GM12878 (cell line): ENCODE measurements at regions of chr3 and their contacts with region 1.

Region 1: GRCh38 chr3:61561374-61562041 is at the start of gene PTPRG:
- DNase-seq: no peak
- ATAC-seq: peak; percentile 61
- H3K4me3 ChIP-seq: peak within 1 kb of the TSS; percentile 59
- H3K27ac ChIP-seq: no peak within 1 kb of the TSS
- H3K4me1 ChIP-seq: no peaks in the 10 kb centered on the region
- H3K27me3 ChIP-seq: peaks cover 5 to 20% of the 10 kb centered on the region in 2 experiments
- CTCF ChIP-seq: no peak
- EP300 ChIP-seq: no peak
- POLR2A ChIP-seq: no peak
- RAD21 ChIP-seq: no peak
- polyA plus RNA-seq, gene PTPRG: 0.29 to 0.42 TPM

Region 2: DNA sequence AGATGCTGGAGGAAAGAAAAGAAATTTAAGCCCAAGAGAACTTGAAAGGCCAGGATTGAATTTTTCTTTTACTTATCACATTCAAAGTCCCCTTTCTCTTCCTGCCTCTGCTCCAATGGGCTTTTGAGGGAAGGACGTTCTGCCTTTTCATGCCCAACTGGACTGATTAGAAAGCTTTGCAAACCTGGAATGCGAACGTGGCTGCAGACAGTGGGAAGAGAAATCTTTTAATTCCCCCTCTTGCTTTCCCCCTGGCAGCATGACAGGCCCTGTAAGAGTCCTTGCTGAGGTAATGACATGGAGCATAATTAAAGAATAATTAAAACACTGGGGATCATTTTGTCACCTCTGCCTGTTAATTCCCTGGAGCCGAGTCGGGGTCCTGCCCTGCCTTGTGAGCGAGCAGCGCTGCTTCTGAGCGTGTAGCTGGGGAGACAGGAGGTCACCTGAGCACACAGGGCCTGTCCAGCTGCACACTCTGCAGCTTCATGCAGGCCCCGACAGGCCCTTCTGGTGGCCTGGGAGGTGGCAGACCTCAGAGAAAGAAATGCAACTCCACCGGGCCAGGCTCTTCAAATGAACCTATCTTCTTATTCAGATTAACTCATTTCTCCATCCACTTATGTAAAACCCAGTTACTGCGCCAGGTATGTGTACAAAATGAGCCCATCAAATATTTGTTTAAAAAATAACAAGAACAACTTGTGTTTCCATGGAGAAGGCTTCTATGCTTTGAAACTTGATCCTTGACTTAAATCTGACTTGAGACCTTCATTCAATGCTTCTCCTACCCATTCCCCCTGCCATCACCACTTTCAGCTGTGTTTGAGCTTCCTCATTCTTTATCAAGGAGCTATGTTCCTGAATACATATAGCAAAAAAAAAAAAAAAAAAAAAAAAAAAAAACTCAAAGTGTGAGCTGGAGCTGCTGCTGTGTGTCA is 1883.5 kb before region 1 on chr3:
- CTCF ChIA-PET with region 1: no interaction called
- POLR2A ChIA-PET with region 1: no interaction called
- RAD21 ChIA-PET with region 1: no interaction called
- SMC1A ChIA-PET with region 1: no interaction called
- in situ Hi-C with region 1: no loop called
- intact Hi-C with region 1: no loop called
- DNase-seq: no peak
- ATAC-seq: no peak
- H3K4me3 ChIP-seq: no peak overlapping the region
- H3K27ac ChIP-seq: no peak overlapping the region
- H3K4me1 ChIP-seq: no peaks in the 10 kb centered on the region
- H3K27me3 ChIP-seq: no peaks in the 10 kb centered on the region; a peak in 1 of 4 replicates
- CTCF ChIP-seq: no peak
- EP300 ChIP-seq: no peak
- POLR2A ChIP-seq: no peak
- RAD21 ChIP-seq: no peak

Region 3: DNA sequence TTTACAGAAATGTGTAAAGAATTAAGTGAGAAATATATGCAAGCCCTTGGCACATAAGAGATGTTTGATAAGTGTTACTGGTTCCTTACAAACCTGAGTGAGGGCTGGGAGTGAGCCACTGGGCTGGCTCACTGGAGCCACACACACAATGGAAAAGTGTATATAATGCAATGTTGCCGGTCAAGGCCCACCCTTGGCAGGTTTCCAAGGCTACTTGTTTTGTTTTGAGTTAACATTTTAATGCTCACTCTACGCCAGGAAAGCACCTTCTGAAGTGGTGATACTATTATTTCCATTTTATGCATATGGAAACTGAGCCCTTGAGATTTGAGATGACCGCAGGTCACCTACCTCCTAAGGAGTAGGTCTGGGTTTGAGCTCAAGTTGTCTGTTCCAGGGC is 238.4 kb before region 1 on chr3:
- CTCF ChIA-PET with region 1: no interaction called
- POLR2A ChIA-PET with region 1: no interaction called
- RAD21 ChIA-PET with region 1: no interaction called
- SMC1A ChIA-PET with region 1: no interaction called
- in situ Hi-C with region 1: no loop called
- intact Hi-C with region 1: no loop called
- DNase-seq: no peak
- ATAC-seq: peak; percentile 62
- H3K4me3 ChIP-seq: no peak overlapping the region
- H3K27ac ChIP-seq: no peak overlapping the region
- H3K4me1 ChIP-seq: no peaks in the 10 kb centered on the region
- H3K27me3 ChIP-seq: no peaks in the 10 kb centered on the region
- CTCF ChIP-seq: no peak
- EP300 ChIP-seq: no peak
- POLR2A ChIP-seq: no peak
- RAD21 ChIP-seq: no peak

Region 4: DNA sequence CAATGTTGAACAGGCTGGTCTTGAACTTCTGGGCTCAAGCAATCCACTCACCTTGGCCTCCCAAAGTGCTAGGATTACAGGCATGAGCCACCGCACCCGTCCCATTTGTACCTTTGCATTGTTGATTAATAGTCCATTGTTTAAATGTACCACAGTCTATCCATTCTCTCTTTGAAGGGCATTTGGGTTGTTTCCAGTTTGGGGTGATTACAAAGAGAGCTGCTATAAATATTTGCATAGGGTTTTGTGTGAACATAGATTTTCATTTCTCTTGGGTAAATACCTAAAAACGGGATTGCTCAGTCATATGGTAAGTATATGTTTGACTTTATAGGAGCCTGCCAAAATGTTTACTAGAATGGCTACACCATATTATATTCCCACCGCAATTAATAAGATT is 13.9 kb before region 1 on chr3:
- CTCF ChIA-PET with region 1: interaction called, 3 read pairs
- POLR2A ChIA-PET with region 1: interaction called, 15 read pairs
- RAD21 ChIA-PET with region 1: interaction called, 8 read pairs
- SMC1A ChIA-PET with region 1: interaction called, 7 read pairs
- in situ Hi-C with region 1: no loop called
- intact Hi-C with region 1: no loop called
- DNase-seq: no peak
- ATAC-seq: peak; percentile 84
- H3K4me3 ChIP-seq: no peak overlapping the region
- H3K27ac ChIP-seq: no peak overlapping the region
- H3K4me1 ChIP-seq: no peaks in the 10 kb centered on the region
- H3K27me3 ChIP-seq: no peaks in the 10 kb centered on the region
- CTCF ChIP-seq: no peak
- EP300 ChIP-seq: peak in 1 of 2 experiments; percentile 70; a peak in 1 of 4 replicates
- POLR2A ChIP-seq: no peak
- RAD21 ChIP-seq: no peak

Region 5: GRCh38 chr3:61682671-61683548 is 121.4 kb after region 1 on chr3:
- CTCF ChIA-PET with region 1: no interaction called
- POLR2A ChIA-PET with region 1: no interaction called
- RAD21 ChIA-PET with region 1: interaction called, 19 read pairs
- SMC1A ChIA-PET with region 1: interaction called, 10 read pairs
- in situ Hi-C with region 1: no loop called
- intact Hi-C with region 1: loop called (anchors 5 kb)
- DNase-seq: no peak
- ATAC-seq: peak; percentile 57
- H3K4me3 ChIP-seq: no peak overlapping the region
- H3K27ac ChIP-seq: no peak overlapping the region
- H3K4me1 ChIP-seq: no peaks in the 10 kb centered on the region
- H3K27me3 ChIP-seq: no peaks in the 10 kb centered on the region; a peak in 1 of 4 replicates
- CTCF ChIP-seq: no peak
- EP300 ChIP-seq: 0 out of 4 replicates have a peak, but pooled peaks of 1 of the 2 experiments have one; percentile 51
- POLR2A ChIP-seq: no peak
- RAD21 ChIP-seq: no peak

Region 6: GRCh38 chr3:61783993-61784718 is 222.6 kb after region 1 on chr3:
- CTCF ChIA-PET with region 1: interaction called, 14 read pairs
- POLR2A ChIA-PET with region 1: no interaction called
- RAD21 ChIA-PET with region 1: interaction called, 14 read pairs
- SMC1A ChIA-PET with region 1: interaction called, 27 read pairs
- in situ Hi-C with region 1: no loop called
- intact Hi-C with region 1: loop called (anchors 5 kb)
- DNase-seq: no peak
- ATAC-seq: peak; percentile 77
- H3K4me3 ChIP-seq: no peak overlapping the region
- H3K27ac ChIP-seq: no peak overlapping the region
- H3K4me1 ChIP-seq: no peaks in the 10 kb centered on the region
- H3K27me3 ChIP-seq: no peaks in the 10 kb centered on the region; a peak in 1 of 4 replicates
- CTCF ChIP-seq: no peak
- EP300 ChIP-seq: no peak
- POLR2A ChIP-seq: no peak
- RAD21 ChIP-seq: no peak

Region 7: DNA sequence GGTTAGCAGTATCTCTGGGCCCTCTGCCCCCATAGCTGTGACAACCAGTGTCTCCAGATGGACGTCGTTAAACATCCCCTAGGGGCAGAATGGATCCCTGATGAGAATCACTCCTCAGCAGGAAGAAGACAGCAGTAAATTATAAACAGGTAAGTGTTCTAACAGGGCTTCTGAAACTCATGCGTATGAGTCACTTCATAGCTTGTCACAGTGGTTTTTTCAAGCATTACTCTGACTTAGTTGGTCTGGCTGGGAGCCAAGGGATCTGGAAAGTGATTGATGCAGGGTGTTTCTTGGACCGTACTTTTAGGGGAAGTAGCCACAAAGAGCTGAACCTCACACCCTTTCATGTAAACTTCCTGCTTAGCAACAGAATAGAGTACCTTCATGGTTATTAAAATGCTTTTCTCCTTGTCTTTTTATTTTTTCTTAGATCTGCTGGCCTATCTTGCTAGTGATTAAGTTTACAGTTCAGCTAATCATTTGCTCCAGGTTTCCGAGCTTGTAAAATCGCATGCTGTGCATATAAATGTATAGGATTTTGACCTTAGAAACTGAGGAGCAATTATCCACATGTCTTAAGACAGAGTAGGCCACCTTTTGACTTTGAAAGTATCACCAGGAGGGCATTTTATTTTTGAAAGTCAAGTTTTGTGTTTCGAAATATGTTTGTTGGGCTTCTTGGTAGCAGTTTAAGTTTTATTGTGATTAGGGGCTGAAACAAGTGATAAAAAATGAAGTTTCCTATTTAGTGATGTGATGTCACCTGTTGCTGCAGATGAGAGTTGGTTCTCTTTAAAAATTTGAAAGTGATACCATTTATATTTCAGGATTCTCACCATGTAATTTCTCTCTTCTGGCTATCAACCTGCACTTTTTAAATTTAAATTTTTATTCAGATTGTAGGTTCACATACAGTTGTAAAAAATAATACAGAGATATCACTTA is 333.8 kb after region 1 on chr3:
- CTCF ChIA-PET with region 1: interaction called, 11 read pairs
- POLR2A ChIA-PET with region 1: interaction called, 3 read pairs
- RAD21 ChIA-PET with region 1: interaction called, 18 read pairs
- SMC1A ChIA-PET with region 1: interaction called, 18 read pairs
- in situ Hi-C with region 1: no loop called
- intact Hi-C with region 1: no loop called
- DNase-seq: peak; percentile 87
- ATAC-seq: peak; percentile 90
- H3K4me3 ChIP-seq: no peak overlapping the region
- H3K27ac ChIP-seq: no peak overlapping the region; the same call in 1 of the 2 replicates
- H3K4me1 ChIP-seq: peaks cover 5% of the 10 kb centered on the region; the same call in 1 of the 2 replicates
- H3K27me3 ChIP-seq: no peaks in the 10 kb centered on the region
- CTCF ChIP-seq: peak in 1 of 3 experiments; percentile 21; a peak in 1 of 6 replicates
- EP300 ChIP-seq: peak; percentile 62 to 92
- POLR2A ChIP-seq: no peak
- RAD21 ChIP-seq: no peak; the same call in 1 of the 2 replicates

Region 8: DNA sequence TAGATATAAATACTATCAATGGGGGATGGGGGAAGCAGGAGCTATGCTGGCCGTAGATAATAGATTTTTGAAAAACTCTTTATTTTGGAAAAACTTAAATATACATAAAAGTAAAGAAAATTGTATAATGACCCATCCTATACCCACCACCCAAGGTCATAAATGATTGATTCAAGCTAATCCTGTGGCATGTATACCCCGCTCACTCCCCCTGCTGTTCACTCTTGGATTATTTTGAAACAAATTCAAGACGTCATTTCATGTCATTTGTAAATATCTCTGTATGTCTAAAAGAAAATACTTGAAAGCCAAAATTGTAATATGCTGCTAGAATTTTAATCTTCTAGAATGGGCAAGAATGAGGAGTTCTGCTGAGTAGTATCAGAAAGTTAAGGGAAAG is 570.1 kb after region 1 on chr3:
- CTCF ChIA-PET with region 1: interaction called, 13 read pairs
- POLR2A ChIA-PET with region 1: no interaction called
- RAD21 ChIA-PET with region 1: interaction called, 5 read pairs
- SMC1A ChIA-PET with region 1: interaction called, 18 read pairs
- in situ Hi-C with region 1: no loop called
- intact Hi-C with region 1: no loop called
- DNase-seq: no peak
- ATAC-seq: peak; percentile 61
- H3K4me3 ChIP-seq: no peak overlapping the region
- H3K27ac ChIP-seq: no peak overlapping the region
- H3K4me1 ChIP-seq: no peaks in the 10 kb centered on the region
- H3K27me3 ChIP-seq: no peaks in the 10 kb centered on the region
- CTCF ChIP-seq: peak in 2 of 3 experiments; percentile 26 to 34; a peak in 2 of 6 replicates
- EP300 ChIP-seq: no peak
- POLR2A ChIP-seq: no peak
- RAD21 ChIP-seq: 0 out of 2 replicates have a peak, but pooled peaks have one; percentile 19